ENCODE measurements at regions of chr2 and their contacts with region 1.

Region 1: DNA sequence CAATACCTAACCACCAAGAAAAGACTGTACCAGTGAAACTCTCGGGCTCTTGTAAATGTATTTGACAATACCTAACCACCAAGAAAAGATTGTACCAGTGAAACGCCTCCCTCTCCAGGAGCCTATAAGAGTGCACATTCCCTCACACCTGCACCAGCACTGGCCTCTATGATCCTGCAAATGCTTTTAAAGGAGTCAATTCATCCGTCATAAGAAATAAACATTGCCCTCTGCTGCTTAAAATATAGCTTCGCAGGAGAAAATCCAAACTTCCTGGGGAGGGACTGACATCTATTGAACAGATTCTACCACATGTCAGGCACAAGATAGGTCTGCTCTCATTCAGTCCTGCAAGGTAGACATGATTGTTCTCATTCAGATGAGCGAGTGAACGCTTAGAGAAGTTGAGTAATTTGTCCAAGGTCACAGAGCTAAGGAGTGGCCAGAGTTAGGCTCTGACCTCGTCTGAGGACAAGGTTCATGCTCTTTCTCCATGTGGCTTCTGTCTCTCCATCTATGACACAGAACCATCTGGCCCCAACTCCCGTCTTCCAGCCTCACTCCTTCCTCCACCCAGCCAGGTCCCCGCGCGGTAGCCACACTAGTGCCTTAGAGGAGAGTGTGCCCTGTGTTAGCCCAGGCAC is 38.7 kb downstream of the MCFD2 start:
- DNase-seq: peak; percentile 92
- ATAC-seq: peak; percentile 56
- H3K4me3 ChIP-seq: no peak overlapping the region
- H3K27ac ChIP-seq: peak overlapping the region; percentile 53
- H3K4me1 ChIP-seq: peaks cover 38% of the 10 kb centered on the region
- H3K27me3 ChIP-seq: no peaks in the 10 kb centered on the region
- CTCF ChIP-seq: peak; percentile 89

Region 2: GRCh38 chr2:46632349-46632748 is 244.5 kb before region 1 on chr2:
- CTCF ChIA-PET with region 1: no interaction called
- POLR2A ChIA-PET with region 1: no interaction called
- intact Hi-C with region 1: loop called (anchors 1 kb)
- DNase-seq: peak; percentile 86
- ATAC-seq: peak; percentile 40; the same call in 1 of the 2 replicates
- H3K4me3 ChIP-seq: no peak overlapping the region
- H3K27ac ChIP-seq: no peak overlapping the region
- H3K4me1 ChIP-seq: peaks cover 8% of the 10 kb centered on the region; the same call in 1 of the 2 replicates
- H3K27me3 ChIP-seq: no peaks in the 10 kb centered on the region
- CTCF ChIP-seq: peak; percentile 77

Region 3: DNA sequence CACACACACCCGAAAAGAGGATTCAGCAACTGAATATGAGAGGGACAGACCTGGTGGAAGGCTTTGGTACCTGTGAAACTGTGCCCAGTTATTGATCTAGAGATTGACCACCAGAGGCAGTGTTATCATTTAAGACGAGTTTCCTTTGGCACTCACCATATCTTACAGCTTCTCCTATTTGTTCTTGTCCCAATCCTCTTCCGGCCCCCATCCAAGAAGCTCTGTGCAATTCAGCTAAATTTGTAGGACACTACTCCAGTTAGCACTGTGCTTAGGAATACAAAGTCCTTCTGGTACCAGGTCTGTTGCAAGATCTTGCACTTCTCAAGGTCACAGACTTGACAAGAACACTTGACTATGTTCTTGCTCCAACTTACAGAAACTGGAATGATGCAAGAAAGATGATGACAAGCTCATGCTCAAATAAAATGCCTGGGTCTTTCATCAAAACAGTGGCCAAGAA is 219.8 kb before region 1 on chr2:
- CTCF ChIA-PET with region 1: interaction called, 5 read pairs
- POLR2A ChIA-PET with region 1: no interaction called
- intact Hi-C with region 1: loop called (anchors 2 kb)
- DNase-seq: peak; percentile 62
- ATAC-seq: peak; percentile 72
- H3K4me3 ChIP-seq: no peak overlapping the region
- H3K27ac ChIP-seq: no peak overlapping the region
- H3K4me1 ChIP-seq: peaks cover 5% of the 10 kb centered on the region
- H3K27me3 ChIP-seq: no peaks in the 10 kb centered on the region
- CTCF ChIP-seq: peak; percentile 76

Region 4: DNA sequence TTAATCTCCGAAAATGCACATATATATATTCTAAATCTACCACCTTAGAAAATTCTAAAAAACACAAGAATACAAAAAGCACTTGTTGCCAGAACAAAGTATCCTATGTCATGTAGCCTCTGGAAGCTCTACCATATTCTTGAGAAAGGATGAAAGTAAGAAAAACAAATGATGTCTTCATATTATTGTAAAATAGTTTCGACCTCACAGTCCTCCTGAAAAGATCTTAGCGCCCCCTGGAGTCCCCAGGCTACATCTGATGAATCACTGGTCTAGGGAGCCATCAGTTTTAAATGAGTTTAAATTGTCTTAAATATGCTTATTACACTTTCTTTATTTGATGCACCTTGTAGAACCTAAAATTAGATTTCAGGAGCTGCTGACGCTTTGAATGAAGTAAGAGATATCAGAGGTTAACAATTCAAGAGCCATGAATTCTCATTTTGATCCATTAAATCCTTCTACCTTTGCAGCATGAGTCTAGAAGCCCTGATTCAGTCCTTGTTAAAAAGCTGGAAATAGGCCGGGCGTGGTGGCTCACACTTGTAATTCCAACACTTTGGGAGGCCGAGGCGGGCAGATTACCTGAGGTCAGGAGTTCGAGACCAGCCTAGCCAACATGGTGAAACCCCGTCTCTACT is 100.1 kb before region 1 on chr2:
- CTCF ChIA-PET with region 1: no interaction called
- POLR2A ChIA-PET with region 1: no interaction called
- intact Hi-C with region 1: loop called (anchors 1 kb)
- DNase-seq: peak; percentile 77
- ATAC-seq: peak; percentile 60
- H3K4me3 ChIP-seq: no peak overlapping the region
- H3K27ac ChIP-seq: no peak overlapping the region
- H3K4me1 ChIP-seq: peaks cover 29% of the 10 kb centered on the region
- H3K27me3 ChIP-seq: no peaks in the 10 kb centered on the region
- CTCF ChIP-seq: peak; percentile 91

Region 5: DNA sequence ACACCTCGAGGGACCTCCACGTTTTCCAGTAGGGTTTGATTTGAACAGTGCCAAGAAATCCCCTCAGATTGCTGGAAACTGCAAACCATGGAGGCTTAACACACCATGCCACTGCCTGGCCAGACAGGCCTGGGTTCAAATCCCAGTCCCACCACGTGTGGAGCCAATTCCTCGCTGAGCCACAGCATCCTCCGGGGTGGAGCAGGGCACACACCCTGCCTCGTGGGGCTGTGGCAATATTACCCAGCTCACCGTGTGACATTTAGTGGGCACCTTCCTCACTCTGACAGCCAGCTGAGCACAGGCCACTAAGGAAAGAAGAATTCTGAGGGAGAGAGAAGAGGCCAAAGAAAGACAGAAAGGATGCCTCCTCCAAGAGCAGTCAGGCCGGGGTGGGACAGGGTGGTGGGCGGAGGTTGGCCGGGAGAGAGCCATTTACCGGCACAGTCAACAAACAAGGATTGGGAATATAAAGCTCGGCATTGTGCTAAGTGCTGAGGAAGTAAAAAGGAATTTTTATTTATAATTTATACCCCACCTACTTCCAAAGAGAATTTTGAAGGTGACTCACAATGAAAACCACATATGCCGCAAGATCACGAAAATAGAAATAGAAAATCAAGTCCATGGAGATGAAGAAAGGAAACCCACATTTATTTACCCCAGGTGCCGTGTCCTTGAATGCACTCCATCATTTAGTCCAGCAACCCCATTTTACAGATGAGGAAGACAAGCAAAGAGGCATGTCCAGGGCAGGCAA is 72.8 kb before region 1 on chr2:
- CTCF ChIA-PET with region 1: no interaction called
- POLR2A ChIA-PET with region 1: no interaction called
- intact Hi-C with region 1: loop called (anchors 2 kb)
- DNase-seq: peak; percentile 95
- ATAC-seq: peak; percentile 94
- H3K4me3 ChIP-seq: peak overlapping the region; percentile 14; the same call in 1 of the 2 replicates
- H3K27ac ChIP-seq: peak overlapping the region; percentile 99
- H3K4me1 ChIP-seq: peaks cover 58% of the 10 kb centered on the region
- H3K27me3 ChIP-seq: no peaks in the 10 kb centered on the region
- CTCF ChIP-seq: no peak

Region 6: DNA sequence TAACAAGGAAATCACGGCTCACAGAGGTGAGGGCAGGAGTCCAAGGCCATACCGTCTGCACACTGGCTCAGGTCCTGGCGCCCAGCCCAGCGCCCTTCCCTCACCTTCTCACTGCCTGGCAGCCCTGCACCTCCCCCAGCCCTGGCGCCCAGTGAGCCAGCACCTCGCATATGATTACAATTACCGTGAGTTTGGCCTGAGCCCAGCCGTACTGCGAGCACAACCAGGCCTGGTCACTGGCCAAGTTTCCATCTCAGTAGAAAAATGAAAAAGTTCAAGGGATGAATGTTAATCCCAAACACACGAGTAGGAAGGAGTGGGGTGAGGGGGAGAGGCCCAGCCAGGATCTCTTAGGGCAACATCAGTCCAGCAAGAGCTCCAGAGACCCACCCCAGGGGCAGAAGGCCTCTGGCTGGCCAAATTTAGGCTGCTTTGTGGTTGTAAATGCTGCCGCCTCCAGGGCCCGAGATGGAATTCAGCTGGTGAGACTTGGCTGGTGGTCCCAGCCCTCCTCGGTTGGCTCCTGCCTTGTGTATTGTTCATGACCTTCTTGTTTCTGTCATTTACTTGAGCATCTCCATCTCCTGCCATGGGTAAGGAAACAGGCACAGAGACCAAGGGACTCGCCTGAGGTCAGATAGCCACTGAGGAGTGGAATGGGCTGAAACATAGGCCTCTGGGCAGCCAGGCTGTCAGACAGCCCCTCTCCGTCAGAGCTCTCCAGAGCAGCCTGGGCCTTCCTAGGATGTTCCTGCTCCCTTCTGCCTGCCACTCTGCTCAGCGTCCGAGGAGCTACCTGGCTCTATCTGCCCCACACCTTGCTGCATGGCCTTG is 29.4 kb before region 1 on chr2:
- CTCF ChIA-PET with region 1: interaction called, 11 read pairs
- POLR2A ChIA-PET with region 1: no interaction called
- intact Hi-C with region 1: no loop called
- DNase-seq: peak; percentile 95
- ATAC-seq: peak; percentile 73
- H3K4me3 ChIP-seq: no peak overlapping the region
- H3K27ac ChIP-seq: peak overlapping the region; percentile 70
- H3K4me1 ChIP-seq: peaks cover 59% of the 10 kb centered on the region
- H3K27me3 ChIP-seq: no peaks in the 10 kb centered on the region
- CTCF ChIP-seq: no peak

Region 7: DNA sequence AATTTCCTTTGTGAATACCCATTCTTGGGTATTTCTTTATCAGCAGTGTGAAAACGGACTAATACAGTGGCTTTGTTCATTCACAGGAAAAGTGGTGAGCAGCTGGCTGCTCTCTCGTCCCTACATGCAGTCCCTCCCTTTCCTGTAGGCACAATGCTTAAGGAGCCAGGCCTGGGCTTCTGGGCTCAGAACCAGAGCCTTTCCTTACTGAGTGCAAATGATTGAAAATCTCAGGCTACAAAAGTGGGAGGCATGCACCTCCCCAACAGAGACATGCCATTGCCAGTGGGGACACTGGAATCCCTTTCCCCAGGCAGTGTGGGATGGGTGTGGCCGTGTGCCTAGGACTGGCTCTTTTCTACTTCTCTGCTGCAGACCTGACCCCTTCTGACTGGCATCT is 22.6 kb before region 1 on chr2:
- CTCF ChIA-PET with region 1: interaction called, 11 read pairs
- POLR2A ChIA-PET with region 1: no interaction called
- intact Hi-C with region 1: loop called (anchors 2 kb)
- DNase-seq: no peak
- ATAC-seq: no peak
- H3K4me3 ChIP-seq: no peak overlapping the region
- H3K27ac ChIP-seq: peak overlapping the region; percentile 94
- H3K4me1 ChIP-seq: peaks cover 68% of the 10 kb centered on the region
- H3K27me3 ChIP-seq: no peaks in the 10 kb centered on the region
- CTCF ChIP-seq: no peak

Measured in PC-3 (cell line).